Natural killer cell (primary cell): ENCODE measurements at regions of chr4 and their contacts with region 1.

Region 1: GRCh38 chr4:71050809-71051208 is 57.4 kb downstream of the DCK start:
- DNase-seq: peak in 1 of 2 donors; percentile 24
- ATAC-seq: peak in 1 of 3 donors; percentile 54
- H3K4me3 ChIP-seq: no peak overlapping the region
- H3K4me3 Mint-ChIP-seq: no peak overlapping the region
- H3K27ac ChIP-seq: no peak overlapping the region
- H3K27ac Mint-ChIP-seq: no peak overlapping the region
- H3K4me1 ChIP-seq: no peaks in the 10 kb centered on the region
- H3K4me1 Mint-ChIP-seq: no peaks in the 10 kb centered on the region
- H3K27me3 ChIP-seq: no peaks in the 10 kb centered on the region
- H3K27me3 Mint-ChIP-seq: no peaks in the 10 kb centered on the region
- CTCF ChIP-seq: peak; percentile 48

Region 2: DNA sequence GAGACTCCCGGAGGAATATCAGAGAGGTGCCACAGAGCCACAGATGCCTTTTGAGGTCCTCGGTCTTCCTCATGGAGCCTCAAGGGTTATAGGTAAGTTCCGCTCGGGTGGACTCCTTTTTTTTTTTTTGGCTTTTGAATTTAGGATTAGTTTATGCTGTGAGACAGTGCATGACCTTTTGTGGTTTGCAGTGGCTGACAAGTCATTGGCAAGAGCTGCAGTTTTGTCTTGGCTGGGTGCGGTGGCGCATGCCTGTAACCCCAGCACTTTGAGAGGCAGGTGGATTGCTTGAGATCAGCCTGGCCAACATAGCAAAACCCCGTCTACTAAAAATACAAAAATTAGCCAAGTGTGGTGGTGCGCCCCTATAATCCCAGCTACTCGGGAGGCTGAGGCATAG is 206.6 kb before region 1 on chr4:
- intact Hi-C with region 1: no loop called
- DNase-seq: no peak
- ATAC-seq: no peak
- H3K4me3 ChIP-seq: no peak overlapping the region
- H3K4me3 Mint-ChIP-seq: no peak overlapping the region
- H3K27ac ChIP-seq: no peak overlapping the region
- H3K27ac Mint-ChIP-seq: no peak overlapping the region
- H3K4me1 ChIP-seq: peaks cover 3% of the 10 kb centered on the region
- H3K4me1 Mint-ChIP-seq: no peaks in the 10 kb centered on the region
- H3K27me3 ChIP-seq: no peaks in the 10 kb centered on the region
- H3K27me3 Mint-ChIP-seq: no peaks in the 10 kb centered on the region
- CTCF ChIP-seq: no peak

Region 3: DNA sequence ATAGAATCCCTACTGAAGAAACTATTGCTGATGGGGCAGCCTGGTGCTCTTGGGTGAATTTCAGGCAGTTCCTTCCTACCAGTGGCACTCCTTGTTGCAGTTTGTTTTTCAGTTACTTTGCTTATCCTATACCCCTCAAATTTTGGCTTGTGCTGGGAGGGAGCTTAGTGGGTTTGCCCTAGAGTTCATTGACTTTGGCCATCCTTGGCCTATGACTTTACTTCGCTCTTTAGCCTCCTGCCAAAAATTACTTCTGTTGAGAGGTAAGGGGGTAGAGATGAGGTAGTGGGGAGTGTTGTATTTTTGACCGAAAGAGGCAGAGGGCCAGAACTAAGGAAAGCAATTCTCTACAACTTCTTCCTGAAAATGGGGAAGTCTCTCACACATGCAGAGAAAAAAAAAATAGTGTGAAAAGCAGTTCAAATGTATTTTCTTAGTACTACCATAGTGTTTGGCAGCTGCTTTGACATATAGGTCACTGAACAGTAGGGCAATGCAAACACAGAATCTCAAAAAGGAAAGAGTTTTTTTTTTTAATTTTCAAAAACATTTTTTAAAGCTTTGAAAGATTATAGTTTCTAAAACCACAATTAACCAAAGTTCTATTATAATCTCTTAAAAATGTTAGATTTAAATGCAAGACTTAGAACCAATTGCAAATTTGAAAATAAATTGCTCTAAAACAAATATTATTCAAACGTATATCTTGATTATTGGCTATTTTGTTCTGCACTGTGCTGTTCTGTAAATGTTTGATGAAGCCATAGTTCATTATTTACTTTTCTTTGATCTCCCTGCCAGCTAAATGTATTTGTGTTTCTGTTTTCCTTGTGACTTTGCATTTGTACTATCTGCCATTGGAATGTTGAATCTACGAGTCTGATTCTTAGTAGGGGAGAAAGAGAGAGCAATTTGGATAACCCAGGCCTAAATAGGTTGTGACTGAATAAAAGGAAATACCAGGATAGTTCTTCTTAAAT is 16.2 kb after region 1 on chr4:
- intact Hi-C with region 1: no loop called
- DNase-seq: no peak
- ATAC-seq: peak in 2 of 3 donors; percentile 60 to 68
- H3K4me3 ChIP-seq: no peak overlapping the region
- H3K4me3 Mint-ChIP-seq: peak overlapping the region; percentile 70
- H3K27ac ChIP-seq: peak overlapping the region; percentile 35
- H3K27ac Mint-ChIP-seq: peak overlapping the region; percentile 76 to 84
- H3K4me1 ChIP-seq: peaks cover 10% of the 10 kb centered on the region
- H3K4me1 Mint-ChIP-seq: peaks cover 21% of the 10 kb centered on the region in 2 donors
- H3K27me3 ChIP-seq: no peaks in the 10 kb centered on the region
- H3K27me3 Mint-ChIP-seq: no peaks in the 10 kb centered on the region
- CTCF ChIP-seq: no peak

Region 4: DNA sequence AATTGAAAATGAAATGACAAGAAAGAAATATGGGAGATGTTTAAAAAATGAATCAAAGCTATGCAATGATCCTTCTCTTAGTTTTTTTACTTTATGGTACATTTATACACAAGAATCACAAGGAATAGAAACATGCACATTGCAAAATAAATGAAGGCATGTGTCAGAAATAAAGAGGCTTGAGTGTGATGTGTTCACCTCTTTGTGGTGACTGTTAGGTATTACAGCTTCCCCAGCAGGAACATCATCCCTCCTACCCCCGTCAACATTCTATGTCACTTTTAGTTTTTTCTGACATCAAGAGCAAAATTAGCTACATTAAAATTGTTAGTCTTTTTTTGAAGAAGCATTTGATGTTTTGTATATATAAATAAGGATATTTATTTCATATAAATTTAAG is 502.8 kb after region 1 on chr4:
- intact Hi-C with region 1: loop called (anchors 5 kb)
- DNase-seq: peak in 1 of 2 donors; percentile 17
- ATAC-seq: peak in 2 of 3 donors; percentile 74 to 78
- H3K4me3 ChIP-seq: no peak overlapping the region
- H3K4me3 Mint-ChIP-seq: no peak overlapping the region
- H3K27ac ChIP-seq: no peak overlapping the region
- H3K27ac Mint-ChIP-seq: no peak overlapping the region
- H3K4me1 ChIP-seq: no peaks in the 10 kb centered on the region
- H3K4me1 Mint-ChIP-seq: no peaks in the 10 kb centered on the region
- H3K27me3 ChIP-seq: no peaks in the 10 kb centered on the region
- H3K27me3 Mint-ChIP-seq: no peaks in the 10 kb centered on the region
- CTCF ChIP-seq: peak; percentile 25